Caco-2 (cell line): ENCODE measurements at regions of chr9 and their contacts with region 1.

Region 1: GRCh38 chr9:33076358-33077004 is at the start of gene SMU1:
- DNase-seq: peak; percentile 96 to 97
- H3K4me3 ChIP-seq: peak within 1 kb of the TSS; percentile 64
- H3K4me3 Mint-ChIP-seq: peak within 1 kb of the TSS; percentile 85
- H3K27ac Mint-ChIP-seq: peak within 1 kb of the TSS; percentile 96
- H3K4me1 ChIP-seq: peaks cover 3% of the 10 kb centered on the region; the same call in 1 of the 2 replicates
- H3K4me1 Mint-ChIP-seq: peaks cover 5% of the 10 kb centered on the region
- H3K27me3 ChIP-seq: no peaks in the 10 kb centered on the region
- H3K27me3 Mint-ChIP-seq: no peaks in the 10 kb centered on the region
- CTCF ChIP-seq: no peak
- total RNA-seq, gene SMU1: 23.6 TPM in 2 replicates

Region 2: GRCh38 chr9:33116860-33117259 is 40.4 kb after region 1 on chr9:
- CTCF ChIA-PET with region 1: no interaction called
- POLR2A ChIA-PET with region 1: no interaction called
- intact Hi-C with region 1: loop called (anchors 5 kb)
- DNase-seq: no peak
- H3K4me3 ChIP-seq: no peak overlapping the region
- H3K4me3 Mint-ChIP-seq: no peak overlapping the region
- H3K27ac Mint-ChIP-seq: no peak overlapping the region
- H3K4me1 ChIP-seq: no peaks in the 10 kb centered on the region
- H3K4me1 Mint-ChIP-seq: peaks cover 3% of the 10 kb centered on the region
- H3K27me3 ChIP-seq: no peaks in the 10 kb centered on the region
- H3K27me3 Mint-ChIP-seq: no peaks in the 10 kb centered on the region
- CTCF ChIP-seq: no peak

Region 3: DNA sequence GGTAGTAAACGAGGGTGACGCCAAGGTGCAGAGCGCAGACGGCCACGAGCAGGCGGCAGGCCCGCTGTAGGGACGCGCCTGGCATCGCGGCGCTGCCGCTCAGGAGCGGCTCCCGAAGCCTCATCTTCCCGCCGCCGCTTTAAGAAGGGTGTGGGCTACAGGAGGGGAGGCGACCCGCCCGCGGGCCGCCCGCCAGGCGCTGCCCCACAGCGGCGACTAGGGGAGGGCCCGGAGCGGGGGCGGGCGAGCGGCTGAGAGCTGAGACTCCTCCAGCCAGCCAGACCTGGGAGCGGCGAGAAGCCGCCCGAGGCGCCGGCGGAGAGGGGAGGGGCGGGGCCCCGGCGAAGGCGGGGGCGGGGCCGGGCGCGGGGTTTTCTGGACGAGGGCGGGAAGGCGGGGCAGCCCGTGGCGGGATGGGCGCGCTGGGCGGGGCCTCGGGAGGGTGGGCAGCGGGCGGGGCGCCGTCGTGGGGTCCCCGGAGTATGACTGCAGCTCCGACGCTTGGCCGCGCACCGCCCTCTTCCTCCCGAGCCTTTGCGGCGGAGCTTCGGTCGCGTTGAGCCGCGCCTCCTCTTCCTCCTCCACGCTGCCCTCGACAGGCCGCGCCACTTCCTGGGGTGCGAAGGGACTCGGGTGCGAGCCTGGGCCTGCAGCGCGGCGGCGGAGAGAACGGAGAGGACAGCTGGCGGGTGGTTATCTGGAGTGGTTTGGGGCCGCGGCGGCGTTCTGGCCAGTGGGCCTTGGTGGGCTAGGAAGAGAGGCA is 90.7 kb after region 1 on chr9 and contains the start of gene B4GALT1:
- CTCF ChIA-PET with region 1: no interaction called
- POLR2A ChIA-PET with region 1: interaction called, 3 read pairs
- intact Hi-C with region 1: loop called (anchors 1 kb)
- DNase-seq: peak; percentile 95 to 97
- H3K4me3 ChIP-seq: peak within 1 kb of the TSS; percentile 91
- H3K4me3 Mint-ChIP-seq: peak within 1 kb of the TSS; percentile 89
- H3K27ac Mint-ChIP-seq: peak within 1 kb of the TSS; percentile 98
- H3K4me1 ChIP-seq: peaks cover 64% of the 10 kb centered on the region
- H3K4me1 Mint-ChIP-seq: peaks cover 66% of the 10 kb centered on the region
- H3K27me3 ChIP-seq: no peaks in the 10 kb centered on the region
- H3K27me3 Mint-ChIP-seq: no peaks in the 10 kb centered on the region
- CTCF ChIP-seq: peak in 1 of 2 experiments; percentile 13
- total RNA-seq, gene B4GALT1: 104 and 121 TPM in 2 replicates

Region 4: DNA sequence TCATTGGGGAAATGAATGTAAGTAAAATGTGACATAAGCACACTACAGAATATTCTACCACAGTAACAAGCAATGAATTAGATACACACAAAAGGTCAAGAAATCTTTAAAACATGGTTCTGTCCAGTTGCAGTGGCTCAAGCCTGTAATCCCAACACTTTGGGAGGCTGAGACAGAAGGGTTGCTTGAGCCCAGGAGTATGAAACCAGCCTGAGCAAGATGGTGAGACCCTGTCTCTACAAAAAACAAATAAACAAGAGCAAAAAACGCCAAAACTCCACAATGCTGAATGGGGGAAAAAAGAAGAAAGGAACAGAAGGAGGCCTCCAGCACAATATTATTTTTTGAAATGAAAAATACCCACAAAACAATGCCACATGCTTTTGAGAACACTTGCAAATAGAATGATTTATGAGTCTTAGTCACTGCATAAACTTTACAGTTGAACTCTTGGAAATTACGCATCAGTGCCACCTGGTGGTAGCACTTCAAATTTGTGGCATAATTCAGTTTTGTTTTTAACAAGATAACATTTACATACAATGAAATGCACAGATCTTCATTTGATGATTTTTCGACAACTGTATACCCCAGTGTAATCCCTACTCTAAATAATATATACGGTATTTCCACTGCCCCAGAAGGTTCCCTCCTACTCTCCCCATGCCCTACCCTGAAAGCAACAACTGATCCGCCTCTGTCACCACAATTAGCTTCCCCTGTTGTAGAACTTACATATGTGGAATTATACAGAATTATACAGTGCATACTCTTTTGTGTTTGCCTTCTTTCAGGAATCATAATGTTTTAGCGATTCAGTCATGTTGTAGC is 149.1 kb after region 1 on chr9:
- CTCF ChIA-PET with region 1: interaction called, 6 read pairs
- POLR2A ChIA-PET with region 1: no interaction called
- intact Hi-C with region 1: loop called (anchors 1 kb)
- DNase-seq: peak; percentile 56 to 69
- H3K4me3 ChIP-seq: no peak overlapping the region
- H3K4me3 Mint-ChIP-seq: no peak overlapping the region
- H3K27ac Mint-ChIP-seq: no peak overlapping the region
- H3K4me1 ChIP-seq: peaks cover 14% of the 10 kb centered on the region
- H3K4me1 Mint-ChIP-seq: peaks cover 27% of the 10 kb centered on the region
- H3K27me3 ChIP-seq: no peaks in the 10 kb centered on the region
- H3K27me3 Mint-ChIP-seq: no peaks in the 10 kb centered on the region
- CTCF ChIP-seq: peak; percentile 62 to 73